Left colon (tissue), 2 donors: ENCODE measurements at regions of chr11 and their contacts with region 1.

Region 1: DNA sequence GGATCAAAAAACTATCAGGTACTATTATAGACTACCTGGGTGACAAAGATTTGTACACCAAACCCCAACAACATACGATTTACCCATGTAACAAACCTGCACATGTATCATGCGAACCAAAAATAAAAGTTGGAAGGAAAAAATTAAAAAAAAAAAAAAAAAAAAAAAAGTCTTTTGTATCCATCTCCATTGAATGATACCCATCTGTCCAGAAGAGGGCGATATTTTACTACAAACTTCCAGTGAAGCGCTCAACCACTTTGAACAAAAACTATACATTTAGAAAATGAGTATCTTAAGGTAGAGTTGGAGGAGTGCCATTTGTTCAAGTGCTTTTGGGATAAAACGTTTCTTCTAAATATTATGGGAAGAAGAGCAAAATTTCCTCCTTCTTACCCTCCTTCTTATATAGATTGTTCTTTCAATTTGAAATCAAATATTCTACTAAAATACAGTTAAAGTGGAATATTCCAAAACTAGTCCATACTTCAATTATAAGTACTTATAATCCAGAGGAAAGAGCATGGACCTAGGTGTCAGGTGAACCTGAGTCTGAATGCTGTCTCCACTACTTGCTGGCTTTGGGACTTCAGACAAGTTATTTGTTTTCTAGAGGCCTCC is 23.3 kb downstream of the ARL14EP start:
- DNase-seq: no peak
- ATAC-seq: peak; percentile 64

Region 2: DNA sequence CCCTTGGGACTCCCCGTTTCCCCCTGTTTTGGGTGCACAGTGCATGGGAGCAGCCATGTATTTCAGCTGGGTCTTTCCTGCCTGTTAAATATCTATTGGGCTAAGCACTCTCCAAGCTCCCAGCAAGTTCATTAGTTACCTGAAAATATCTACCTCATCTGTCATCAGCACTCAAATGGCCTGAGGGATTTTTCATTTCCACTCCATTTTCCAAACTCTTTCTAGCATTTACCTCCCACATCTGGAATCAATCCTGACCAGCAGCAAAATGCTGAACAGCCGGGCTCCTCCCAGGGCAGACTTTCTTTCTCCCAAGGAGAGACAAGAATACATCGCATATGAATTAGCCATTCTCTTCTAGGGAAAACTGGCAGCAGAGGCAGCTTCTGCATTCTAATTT is 513.5 kb after region 1 on chr11:
- intact Hi-C with region 1: loop called in 1 of 2 experiments (anchors 5 kb)
- DNase-seq: no peak
- ATAC-seq: no peak

Region 3: GRCh38 chr11:30917859-30918478 is 571.8 kb after region 1 on chr11:
- intact Hi-C with region 1: loop called in 1 of 2 experiments (anchors 5 kb)
- DNase-seq: peak in 1 of 2 donors; percentile 7
- ATAC-seq: peak; percentile 50